AG04450 (cell line): ENCODE measurements at regions of chr11 and their contacts with region 1.

Region 1: GRCh38 chr11:65988791-65989592 is 13.0 kb downstream of the EIF1AD start:
- DNase-seq: peak; percentile 92
- H3K4me3 ChIP-seq: no peak overlapping the region
- H3K27ac ChIP-seq: no peak overlapping the region
- H3K27me3 ChIP-seq: no peaks in the 10 kb centered on the region
- CTCF ChIP-seq: peak; percentile 97

Region 2: GRCh38 chr11:65637794-65638317 is 351.1 kb before region 1 on chr11 and contains the start of gene SIPA1:
- CTCF ChIA-PET with region 1: no interaction called
- POLR2A ChIA-PET with region 1: no interaction called
- DNase-seq: peak; percentile 82
- H3K4me3 ChIP-seq: peak within 1 kb of the TSS; percentile 71
- H3K27ac ChIP-seq: peak within 1 kb of the TSS; percentile 73
- H3K27me3 ChIP-seq: no peaks in the 10 kb centered on the region
- CTCF ChIP-seq: peak; percentile 62
- polyA plus RNA-seq, gene SIPA1: 11.4 and 19.8 TPM in 2 replicates

Region 3: DNA sequence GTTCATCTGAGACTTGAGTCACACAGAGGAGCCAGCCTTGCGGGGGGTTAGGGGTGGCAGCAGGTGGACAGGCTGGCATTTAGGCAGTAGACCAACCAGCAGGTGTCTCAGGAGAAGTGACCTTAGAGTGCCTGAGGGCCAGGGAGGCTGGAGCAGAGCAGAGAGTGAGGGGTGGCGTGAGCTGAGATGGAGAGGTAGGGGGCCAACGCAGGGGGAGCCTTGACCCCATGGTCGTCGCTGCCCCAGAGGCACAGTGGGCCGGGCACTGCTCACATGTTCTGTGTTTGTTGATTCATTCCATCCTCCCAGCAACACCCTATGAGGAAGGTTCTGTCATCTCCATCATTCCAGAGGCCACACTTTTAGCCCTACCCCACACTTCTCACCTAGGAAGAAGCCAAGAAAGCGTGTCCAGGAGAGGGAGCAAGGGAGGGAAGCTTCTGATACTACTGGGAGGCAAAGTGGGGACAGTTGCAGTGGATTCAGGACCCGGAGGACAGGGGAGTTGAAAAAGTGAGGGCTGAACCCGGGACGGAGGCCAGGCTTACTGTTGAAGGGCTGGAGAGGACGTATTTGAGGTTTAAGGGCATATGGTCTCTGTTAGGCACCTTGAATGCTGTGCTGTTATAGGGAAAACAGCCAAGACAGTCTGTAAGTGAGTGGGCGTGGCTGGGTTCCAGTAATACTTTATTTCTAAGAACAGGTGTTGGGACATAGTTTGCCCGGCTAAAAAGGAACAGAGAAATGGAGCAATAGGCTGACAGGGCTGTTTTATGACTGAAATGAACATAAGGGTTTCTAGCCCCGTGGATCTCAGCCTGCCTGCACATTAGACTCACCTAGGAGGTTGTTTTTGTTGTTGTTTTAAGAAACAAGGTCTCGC is 20.2 kb before region 1 on chr11:
- CTCF ChIA-PET with region 1: interaction called, 14 read pairs
- POLR2A ChIA-PET with region 1: no interaction called
- DNase-seq: no peak
- H3K4me3 ChIP-seq: no peak overlapping the region
- H3K27ac ChIP-seq: no peak overlapping the region
- H3K27me3 ChIP-seq: no peaks in the 10 kb centered on the region
- CTCF ChIP-seq: no peak

Region 4: DNA sequence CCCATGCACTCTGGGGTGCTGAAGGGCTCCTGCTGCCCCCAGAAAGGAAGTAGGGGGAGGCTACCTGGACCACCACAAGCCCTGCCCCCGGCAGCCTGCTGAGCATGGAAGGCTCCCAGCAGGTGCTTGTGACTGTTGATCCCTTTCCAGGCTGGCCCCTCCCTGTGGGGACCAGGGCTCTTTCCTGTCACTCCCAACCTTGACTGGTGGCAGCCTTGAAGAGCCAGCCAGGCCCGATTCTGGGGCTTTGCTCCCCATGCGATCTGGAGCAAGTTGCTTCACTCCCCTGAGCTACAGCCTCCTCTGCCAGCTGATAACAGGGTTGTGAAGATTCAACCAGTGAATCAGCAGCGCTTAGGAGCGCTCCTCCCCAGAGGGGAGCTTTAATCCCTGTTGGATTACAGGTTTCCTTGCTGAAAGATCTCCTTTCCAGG is 18.2 kb after region 1 on chr11:
- CTCF ChIA-PET with region 1: no interaction called
- POLR2A ChIA-PET with region 1: no interaction called
- DNase-seq: no peak
- H3K4me3 ChIP-seq: no peak overlapping the region
- H3K27ac ChIP-seq: no peak overlapping the region
- H3K27me3 ChIP-seq: peaks cover 1% of the 10 kb centered on the region
- CTCF ChIP-seq: no peak